Dendritic cell treated with granulocyte-macrophage colony-stimulating factor and Interleukin-4, amounts not matched to agents 40 ng/mL and 50 ng/mL, for 4 days (primary cell): ENCODE measurements at regions of chr3 and their contacts with region 1.

Region 1: DNA sequence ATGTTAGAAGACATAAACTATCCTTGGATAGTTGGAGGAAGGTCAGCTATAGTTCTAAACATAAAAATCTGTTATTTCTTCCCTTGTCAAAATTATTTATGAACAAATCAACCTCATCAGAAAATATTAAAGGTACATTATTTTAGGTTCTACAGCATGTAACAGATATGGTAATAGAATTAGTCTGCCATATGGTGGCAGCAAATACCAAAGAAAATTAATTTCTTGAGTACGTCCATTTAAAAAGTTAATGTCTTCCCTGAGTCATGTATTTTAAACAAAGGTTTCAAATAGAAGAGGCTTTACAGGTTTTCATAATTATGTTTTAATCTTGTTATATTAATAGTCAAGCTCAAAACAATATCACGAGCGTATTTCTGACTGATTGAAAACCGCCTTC is 17.9 kb upstream of the ANKRD28 start:
- H3K4me3 Mint-ChIP-seq: no peak overlapping the region
- H3K27ac Mint-ChIP-seq: no peak overlapping the region
- H3K4me1 Mint-ChIP-seq: no peaks in the 10 kb centered on the region
- H3K27me3 Mint-ChIP-seq: no peaks in the 10 kb centered on the region

Region 2: DNA sequence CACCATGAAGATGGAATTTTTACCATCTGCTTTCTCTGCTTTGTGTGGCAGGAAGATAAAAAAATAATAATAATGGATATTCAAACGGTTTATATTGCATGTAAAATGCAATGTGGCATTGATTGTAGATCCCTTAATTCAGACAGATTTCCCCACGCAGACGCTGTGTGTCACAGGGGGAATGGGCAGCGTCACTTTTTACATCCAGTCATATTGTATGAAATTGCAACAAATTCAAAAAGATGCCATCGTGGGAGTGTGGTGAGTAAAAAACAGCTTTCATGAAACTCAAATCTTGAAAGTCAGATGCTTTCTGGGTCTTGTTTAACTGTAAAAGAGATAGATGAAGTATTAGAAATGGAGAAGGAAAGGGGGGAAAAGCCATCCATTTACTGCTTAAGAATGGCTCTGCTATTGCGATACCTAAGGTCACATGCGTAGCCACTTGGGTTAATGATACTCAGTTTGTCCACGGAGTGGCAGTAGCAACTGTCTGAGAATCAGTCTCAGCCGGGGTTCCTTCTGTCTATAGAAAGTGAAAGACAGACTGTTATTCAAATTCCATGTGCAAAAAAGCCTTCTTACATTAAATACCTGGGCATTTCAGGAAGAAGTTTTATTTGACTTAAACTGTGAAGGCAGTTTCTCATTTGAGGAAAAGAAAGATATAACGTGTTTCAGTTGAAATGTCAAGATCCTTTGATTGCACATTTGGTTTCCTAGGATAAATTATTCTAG is 185.7 kb before region 1 on chr3:
- intact Hi-C with region 1: loop called (anchors 1 kb)
- H3K4me3 Mint-ChIP-seq: no peak overlapping the region
- H3K27ac Mint-ChIP-seq: no peak overlapping the region
- H3K4me1 Mint-ChIP-seq: peaks cover 5% of the 10 kb centered on the region
- H3K27me3 Mint-ChIP-seq: no peaks in the 10 kb centered on the region

Region 3: DNA sequence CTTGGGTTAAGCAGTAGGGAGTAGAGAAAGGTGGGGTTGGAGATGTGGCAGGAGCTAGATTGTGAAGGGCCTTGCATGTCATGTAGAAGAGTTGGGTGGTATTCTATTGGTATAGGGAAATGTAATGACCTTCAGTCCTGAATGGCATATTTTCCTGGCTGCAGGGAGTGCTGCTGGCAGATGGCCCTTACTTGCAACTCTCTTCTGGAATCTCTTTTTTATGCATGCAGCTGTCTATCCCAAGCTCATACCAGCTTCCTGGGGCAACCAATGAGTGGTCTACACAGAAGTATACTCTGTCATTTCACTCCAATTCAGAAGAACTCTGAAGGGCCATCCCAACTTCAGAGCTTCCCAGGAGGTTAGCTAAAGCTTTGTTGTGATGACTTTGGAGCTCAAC is 126.8 kb after region 1 on chr3:
- intact Hi-C with region 1: no loop called
- H3K4me3 Mint-ChIP-seq: no peak overlapping the region
- H3K27ac Mint-ChIP-seq: no peak overlapping the region
- H3K4me1 Mint-ChIP-seq: no peaks in the 10 kb centered on the region
- H3K27me3 Mint-ChIP-seq: no peaks in the 10 kb centered on the region

Region 4: GRCh38 chr3:16177962-16178627 is 362.4 kb after region 1 on chr3:
- intact Hi-C with region 1: loop called (anchors 5 kb)
- H3K4me3 Mint-ChIP-seq: no peak overlapping the region
- H3K27ac Mint-ChIP-seq: no peak overlapping the region
- H3K4me1 Mint-ChIP-seq: peaks cover 18% of the 10 kb centered on the region
- H3K27me3 Mint-ChIP-seq: peaks cover 13% of the 10 kb centered on the region

Region 5: DNA sequence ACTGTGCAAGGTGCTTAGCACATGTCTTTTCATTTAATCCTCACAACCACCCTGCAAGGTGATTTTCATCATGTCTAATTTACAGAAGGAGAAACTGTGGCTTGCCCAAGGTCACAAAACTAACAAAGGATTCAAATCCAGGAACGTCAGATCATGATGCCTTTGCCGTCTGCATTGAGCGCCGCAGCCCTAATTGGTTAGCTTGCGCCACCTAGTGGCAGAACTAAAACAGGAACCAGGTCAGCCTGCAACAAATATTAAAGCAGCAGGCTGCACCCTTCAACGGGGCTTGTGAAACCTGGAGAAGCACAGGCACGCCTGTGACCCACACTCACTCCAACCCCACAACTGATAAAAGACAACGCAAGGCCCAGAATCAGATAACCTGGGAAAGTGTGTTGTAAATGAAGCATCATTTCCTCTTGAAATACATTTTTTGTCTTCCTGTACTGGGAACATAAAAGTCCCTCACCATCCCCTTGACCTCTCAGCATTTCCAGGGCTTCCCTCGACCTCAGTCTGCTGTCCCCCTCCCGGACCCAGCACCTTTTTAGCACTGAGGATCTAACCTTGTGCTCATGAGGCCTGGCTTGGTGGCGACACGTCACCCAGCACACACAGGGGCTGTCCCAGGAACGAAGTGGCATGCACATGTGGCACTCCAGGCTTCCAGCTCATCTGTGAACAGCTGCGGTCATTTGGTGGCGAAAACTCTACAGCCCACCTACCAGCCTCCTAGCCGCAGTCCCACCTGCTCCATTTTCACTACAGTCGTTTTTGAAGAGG is 431.8 kb after region 1 on chr3:
- intact Hi-C with region 1: loop called (anchors 2 kb)
- H3K4me3 Mint-ChIP-seq: no peak overlapping the region
- H3K27ac Mint-ChIP-seq: no peak overlapping the region
- H3K4me1 Mint-ChIP-seq: peaks cover 5% of the 10 kb centered on the region
- H3K27me3 Mint-ChIP-seq: no peaks in the 10 kb centered on the region